ENCODE measurements at regions of chr10 and their contacts with region 1.

Region 1: GRCh38 chr10:126465771-126466170 is 77.5 kb upstream of the ADAM12 start:
- DNase-seq: no peak

Region 2: GRCh38 chr10:126387023-126387921 is 78.5 kb before region 1 on chr10:
- intact Hi-C with region 1: loop called in 1 of 2 experiments (anchors 2 kb)
- DNase-seq: peak; percentile 89

Region 3: GRCh38 chr10:126421754-126422394 is 43.9 kb before region 1 on chr10:
- intact Hi-C with region 1: no loop called
- DNase-seq: no peak

Region 4: DNA sequence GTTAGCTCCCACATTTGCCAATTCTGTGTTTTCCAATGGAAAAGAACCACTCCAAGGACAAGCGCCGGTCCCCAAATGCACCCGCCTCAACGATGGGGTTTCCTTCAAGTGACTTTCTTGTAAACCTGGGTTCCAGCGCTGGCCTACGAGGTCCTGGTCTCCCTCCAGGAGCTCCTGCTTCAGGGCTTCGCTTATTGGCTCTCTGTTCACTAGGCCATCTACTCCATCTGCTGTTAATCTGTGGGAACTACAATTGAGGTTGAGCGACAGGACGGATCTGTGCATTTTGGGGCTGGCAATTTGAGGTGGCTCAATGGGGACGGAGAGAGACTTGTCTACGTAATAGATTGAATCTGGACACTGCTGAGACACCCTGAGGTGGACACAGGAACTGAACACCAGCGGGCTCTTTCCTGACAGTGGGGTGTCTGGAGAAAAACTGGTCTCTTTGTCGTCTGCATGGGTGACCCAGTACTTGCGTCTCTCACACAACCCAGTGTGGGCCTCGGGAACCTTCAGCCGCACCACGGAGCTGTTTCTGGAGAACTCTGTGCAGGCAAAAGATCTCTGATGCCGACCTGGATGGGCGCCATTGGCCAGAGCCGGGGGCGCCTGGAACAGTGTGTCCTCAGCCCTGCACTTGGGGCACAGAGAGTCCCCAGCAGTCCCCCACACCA is 38.4 kb after region 1 on chr10:
- intact Hi-C with region 1: no loop called
- DNase-seq: peak; percentile 80

Measured in posterior vena cava (tissue), 2 donors.